Activated CD4-positive, alpha-beta memory T cell treated with anti-CD3 and anti-CD28 coated beads for 36 hours (primary cell): ENCODE measurements at regions of chr10 and their contacts with region 1.

Region 1: GRCh38 chr10:102225646-102226541 is at the start of gene ELOVL3:
- DNase-seq: peak; percentile 94
- H3K4me3 Mint-ChIP-seq: peak within 1 kb of the TSS; percentile 47
- H3K27ac Mint-ChIP-seq: no peak within 1 kb of the TSS
- H3K4me1 Mint-ChIP-seq: peaks cover 13% of the 10 kb centered on the region
- H3K27me3 Mint-ChIP-seq: peaks cover 40% of the 10 kb centered on the region
- total RNA-seq, gene ELOVL3: 0.21 to 0.56 TPM

Region 2: GRCh38 chr10:101840741-101841453 is 385.0 kb before region 1 on chr10:
- CTCF ChIA-PET with region 1: no interaction called
- POLR2A ChIA-PET with region 1: no interaction called
- intact Hi-C with region 1: no loop called
- DNase-seq: peak; percentile 88
- H3K4me3 Mint-ChIP-seq: peak overlapping the region; percentile 74
- H3K27ac Mint-ChIP-seq: no peak overlapping the region
- H3K4me1 Mint-ChIP-seq: peaks cover 48% of the 10 kb centered on the region
- H3K27me3 Mint-ChIP-seq: peaks cover 2% of the 10 kb centered on the region

Region 3: GRCh38 chr10:102208311-102209035 is 17.4 kb before region 1 on chr10:
- CTCF ChIA-PET with region 1: interaction called, 11 read pairs
- POLR2A ChIA-PET with region 1: no interaction called
- intact Hi-C with region 1: no loop called
- DNase-seq: no peak
- H3K4me3 Mint-ChIP-seq: no peak overlapping the region
- H3K27ac Mint-ChIP-seq: no peak overlapping the region
- H3K4me1 Mint-ChIP-seq: peaks cover 4% of the 10 kb centered on the region
- H3K27me3 Mint-ChIP-seq: no peaks in the 10 kb centered on the region

Region 4: GRCh38 chr10:102283488-102283887 is 57.6 kb after region 1 on chr10:
- CTCF ChIA-PET with region 1: interaction called, 32 read pairs
- POLR2A ChIA-PET with region 1: no interaction called
- intact Hi-C with region 1: loop called (anchors 5 kb)
- DNase-seq: peak; percentile 40
- H3K4me3 Mint-ChIP-seq: peak overlapping the region; percentile 46
- H3K27ac Mint-ChIP-seq: peak overlapping the region; percentile 93
- H3K4me1 Mint-ChIP-seq: peaks cover 85% of the 10 kb centered on the region
- H3K27me3 Mint-ChIP-seq: no peaks in the 10 kb centered on the region

Region 5: GRCh38 chr10:102352066-102352715 is 126.3 kb after region 1 on chr10:
- CTCF ChIA-PET with region 1: interaction called, 1,053 read pairs
- POLR2A ChIA-PET with region 1: interaction called, 34 read pairs
- intact Hi-C with region 1: loop called (anchors 1 kb)
- DNase-seq: peak; percentile 77
- H3K4me3 Mint-ChIP-seq: no peak overlapping the region
- H3K27ac Mint-ChIP-seq: no peak overlapping the region
- H3K4me1 Mint-ChIP-seq: peaks cover 4% of the 10 kb centered on the region
- H3K27me3 Mint-ChIP-seq: no peaks in the 10 kb centered on the region

Region 6: GRCh38 chr10:102399217-102400089 is 173.6 kb after region 1 on chr10:
- CTCF ChIA-PET with region 1: interaction called, 213 read pairs
- POLR2A ChIA-PET with region 1: interaction called, 16 read pairs
- intact Hi-C with region 1: loop called (anchors 2 kb)
- DNase-seq: peak; percentile 92
- H3K4me3 Mint-ChIP-seq: peak overlapping the region; percentile 68
- H3K27ac Mint-ChIP-seq: peak overlapping the region; percentile 74
- H3K4me1 Mint-ChIP-seq: peaks cover 40% of the 10 kb centered on the region
- H3K27me3 Mint-ChIP-seq: no peaks in the 10 kb centered on the region

Region 7: DNA sequence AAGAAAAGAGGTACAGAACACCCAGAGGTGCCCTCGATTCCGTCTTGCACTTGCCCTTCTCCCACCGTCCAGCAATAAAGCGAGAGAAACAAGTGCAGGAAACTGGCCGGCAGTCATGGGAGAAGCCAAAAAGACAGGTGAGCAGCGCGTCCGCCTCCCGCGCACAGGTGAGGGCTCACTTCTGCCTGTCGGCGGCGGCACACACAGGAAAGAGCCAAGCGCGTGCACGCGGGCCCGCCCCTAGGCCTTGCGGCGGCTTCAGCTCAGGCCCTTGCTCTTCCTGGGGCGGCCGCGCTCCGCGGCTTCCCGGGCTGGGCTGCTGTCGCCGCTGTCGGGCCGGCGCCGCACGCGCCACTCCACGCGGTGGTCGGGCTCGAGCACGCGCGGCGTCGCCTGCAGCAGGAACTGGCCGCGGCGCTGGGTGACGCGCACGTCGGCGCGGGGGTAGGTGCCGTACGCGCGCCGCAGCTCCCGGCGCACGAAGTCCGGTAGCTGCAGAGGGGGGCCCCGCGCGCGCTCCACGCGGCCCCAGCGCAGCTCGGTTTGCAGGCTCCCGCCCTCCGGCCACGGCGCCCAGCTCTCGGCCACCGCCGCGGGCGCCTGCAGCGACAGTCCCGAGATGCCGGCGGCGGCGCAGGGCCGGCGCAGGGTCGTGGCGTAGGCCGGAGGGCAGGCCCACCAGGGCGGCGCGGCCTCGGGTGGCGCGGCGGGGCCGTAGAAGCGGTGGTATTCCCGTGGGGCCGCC is 224.5 kb after region 1 on chr10:
- CTCF ChIA-PET with region 1: interaction called, 15 read pairs
- POLR2A ChIA-PET with region 1: no interaction called
- intact Hi-C with region 1: no loop called
- DNase-seq: peak; percentile 90
- H3K4me3 Mint-ChIP-seq: peak overlapping the region; percentile 94
- H3K27ac Mint-ChIP-seq: peak overlapping the region; percentile 94
- H3K4me1 Mint-ChIP-seq: peaks cover 35% of the 10 kb centered on the region
- H3K27me3 Mint-ChIP-seq: no peaks in the 10 kb centered on the region

Region 8: DNA sequence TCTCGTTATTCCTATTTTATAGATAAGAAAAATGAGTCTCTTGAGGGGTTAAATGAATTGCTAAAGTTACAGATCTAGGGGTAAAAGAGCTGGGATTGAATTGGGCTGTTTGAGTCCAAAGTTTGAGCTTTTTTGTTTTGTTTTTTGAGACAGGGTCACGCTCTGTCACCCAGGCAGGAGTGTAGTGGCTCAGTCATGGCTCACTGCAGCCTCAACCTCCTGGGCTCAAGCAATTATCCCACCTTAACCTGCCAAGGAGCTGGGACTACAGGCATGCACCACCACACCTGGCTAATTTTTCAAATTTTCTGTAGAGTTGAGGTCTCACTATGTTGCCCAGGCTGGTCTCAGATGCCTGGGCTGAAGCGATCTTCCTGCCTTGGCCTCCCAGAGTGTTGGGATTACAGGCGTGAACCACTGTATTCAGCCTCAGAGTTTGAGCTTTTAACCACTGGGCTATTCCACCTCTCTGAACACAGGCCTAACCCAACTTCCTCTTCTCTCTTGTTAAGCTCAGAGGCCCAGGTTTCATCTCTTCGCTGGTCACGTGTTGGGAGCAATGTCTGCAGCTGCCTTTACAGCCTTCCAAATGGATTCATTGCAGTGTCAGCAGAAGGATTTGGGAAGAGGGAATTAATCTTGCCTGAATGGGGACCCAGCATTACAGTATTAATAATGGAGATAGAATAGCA is 285.8 kb after region 1 on chr10:
- CTCF ChIA-PET with region 1: no interaction called
- POLR2A ChIA-PET with region 1: no interaction called
- intact Hi-C with region 1: no loop called
- DNase-seq: no peak
- H3K4me3 Mint-ChIP-seq: no peak overlapping the region
- H3K27ac Mint-ChIP-seq: no peak overlapping the region
- H3K4me1 Mint-ChIP-seq: peaks cover 12% of the 10 kb centered on the region
- H3K27me3 Mint-ChIP-seq: no peaks in the 10 kb centered on the region

Region 9: GRCh38 chr10:102583435-102584417 is 357.8 kb after region 1 on chr10:
- CTCF ChIA-PET with region 1: interaction called, 31 read pairs
- POLR2A ChIA-PET with region 1: no interaction called
- intact Hi-C with region 1: loop called (anchors 5 kb)
- DNase-seq: peak; percentile 90
- H3K4me3 Mint-ChIP-seq: no peak overlapping the region
- H3K27ac Mint-ChIP-seq: no peak overlapping the region
- H3K4me1 Mint-ChIP-seq: peaks cover 13% of the 10 kb centered on the region
- H3K27me3 Mint-ChIP-seq: no peaks in the 10 kb centered on the region